Cardiac septum (tissue), 1 donor: ENCODE measurements at regions of chr2 and their contacts with region 1.

Region 1: GRCh38 chr2:201933792-201934237 is 99.8 kb upstream of the FZD7 start:
- DNase-seq: no peak

Region 2: DNA sequence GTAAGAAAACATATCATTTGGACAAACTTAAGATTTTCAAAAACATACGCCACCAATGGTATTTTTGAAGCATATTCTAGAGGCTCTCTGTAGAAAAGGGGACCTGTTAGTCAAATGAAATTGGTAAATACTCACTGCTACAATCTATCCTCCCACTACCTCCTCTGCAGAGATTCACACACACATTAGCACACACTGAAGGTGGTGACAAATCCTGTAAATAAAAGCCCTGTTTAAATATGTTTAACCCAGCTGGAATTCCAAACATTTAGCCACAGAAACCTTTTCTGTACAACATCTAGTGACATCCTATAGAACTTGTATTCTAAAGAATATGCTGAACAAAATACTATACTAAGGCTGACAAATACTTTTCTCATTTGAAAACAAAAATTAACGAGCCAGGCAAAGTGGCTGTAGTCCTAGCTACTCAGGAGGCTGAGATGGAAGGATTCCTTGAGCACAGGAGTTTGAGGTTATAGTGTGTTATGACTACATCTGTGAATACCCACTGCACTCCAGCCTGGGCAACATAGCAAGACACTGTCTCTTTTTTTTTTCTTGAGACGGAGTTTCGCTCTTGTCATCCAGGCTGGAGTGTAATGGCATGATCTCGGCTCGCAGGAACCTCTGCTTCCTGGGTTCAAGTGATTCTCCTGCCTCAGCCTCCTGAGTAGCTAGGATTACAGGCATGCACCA is 178.9 kb before region 1 on chr2:
- intact Hi-C with region 1: no loop called
- DNase-seq: no peak

Region 3: DNA sequence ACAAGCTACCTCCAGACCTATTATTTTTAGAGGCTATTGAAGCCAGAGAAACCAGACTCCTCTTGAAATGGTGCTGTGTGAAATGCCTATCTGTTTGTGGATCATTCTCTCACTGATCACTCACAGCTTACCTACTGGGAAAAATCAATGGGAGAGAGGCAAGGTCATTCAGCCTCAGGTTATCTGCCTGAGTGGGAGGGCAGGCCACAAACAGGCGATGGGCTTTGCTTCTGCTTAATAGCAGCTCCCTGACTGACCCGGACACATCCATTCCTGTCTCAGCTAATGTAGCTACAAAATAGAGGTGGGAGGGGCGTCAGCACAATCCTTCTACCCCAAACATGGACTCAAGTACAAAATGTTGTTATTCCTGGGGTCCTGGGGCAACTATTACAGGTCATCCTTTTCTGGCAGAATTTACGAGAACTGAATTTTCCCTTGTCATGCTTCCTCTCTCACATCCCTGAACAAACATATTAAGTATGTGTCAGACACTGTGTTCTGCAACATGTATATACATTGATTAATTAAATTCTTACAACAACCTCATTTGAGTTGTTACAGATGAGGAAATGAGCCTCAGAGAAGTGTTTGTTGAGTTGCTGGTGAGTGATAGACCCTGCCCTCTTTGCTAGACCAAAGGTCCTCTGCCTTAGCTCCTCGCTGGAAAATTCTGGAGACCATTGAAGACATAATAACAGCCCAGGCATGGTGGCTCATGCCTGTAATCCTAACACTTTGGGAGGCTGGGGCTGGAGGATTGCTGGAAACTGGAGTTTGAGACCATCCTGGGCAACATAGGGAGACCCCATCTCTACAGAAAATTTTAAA is 67.0 kb before region 1 on chr2:
- intact Hi-C with region 1: no loop called
- DNase-seq: no peak

Region 4: DNA sequence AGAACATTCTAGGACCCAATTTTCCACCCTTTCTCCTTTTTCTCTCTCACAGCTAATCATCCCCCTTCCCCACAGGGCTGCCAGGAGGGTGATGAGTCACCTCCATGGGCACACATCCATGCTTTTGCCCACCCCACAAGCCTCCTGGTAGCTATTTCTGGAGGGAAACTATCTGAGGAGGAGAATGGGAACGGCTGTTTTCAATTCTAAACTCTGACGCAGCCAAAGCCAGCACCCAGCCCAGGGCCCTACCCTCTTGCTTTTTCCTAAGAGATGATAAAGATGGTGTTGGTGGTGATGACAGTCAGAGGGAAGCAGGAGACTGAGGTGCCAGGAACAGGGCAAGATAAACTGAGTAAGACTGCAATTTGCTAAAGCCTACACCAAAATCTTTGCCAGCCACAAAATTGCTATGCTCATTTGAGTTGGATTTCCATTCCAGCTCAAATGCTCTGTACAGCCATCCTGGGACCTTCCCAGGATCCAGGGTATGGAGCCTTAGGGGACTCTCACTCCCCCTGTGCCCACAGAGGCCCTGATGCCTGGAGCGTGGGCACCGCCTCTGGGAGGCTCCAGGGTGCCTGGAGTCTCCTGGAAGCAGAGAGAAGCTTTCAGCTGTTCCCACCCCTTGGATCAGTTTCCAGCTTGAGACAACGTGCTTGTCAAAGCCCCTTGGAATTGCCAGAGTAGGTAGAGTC is 37.9 kb after region 1 on chr2:
- intact Hi-C with region 1: no loop called
- DNase-seq: no peak

Region 5: GRCh38 chr2:201984800-201985525 is 51.1 kb after region 1 on chr2:
- intact Hi-C with region 1: loop called (anchors 5 kb)
- DNase-seq: peak; percentile 73